Ovary (tissue), 10 donors: ENCODE measurements at regions of chr20 and their contacts with region 1.

Region 1: GRCh38 chr20:45946149-45946970 is 11.9 kb downstream of the PCIF1 start:
- DNase-seq: peak; percentile 78 to 89 (median 84)
- H3K4me3 ChIP-seq: no peak overlapping the region
- H3K27ac ChIP-seq: peak overlapping the region; percentile 85 to 88
- H3K4me1 ChIP-seq: peaks cover 16% of the 10 kb centered on the region
- H3K27me3 ChIP-seq: no peaks in the 10 kb centered on the region
- CTCF ChIP-seq: no peak
- EP300 ChIP-seq: no peak
- POLR2A ChIP-seq: no peak

Region 2: GRCh38 chr20:45880988-45881788 is 65.2 kb before region 1 on chr20 and contains the start of gene ZSWIM1:
- intact Hi-C with region 1: loop called in 1 of 4 experiments (anchors 10 kb)
- DNase-seq: peak; percentile 99 to 100 (median 100)
- H3K4me3 ChIP-seq: peak within 1 kb of the TSS; percentile 60
- H3K27ac ChIP-seq: peak within 1 kb of the TSS; percentile 62 to 79
- H3K4me1 ChIP-seq: peaks cover 2% of the 10 kb centered on the region
- H3K27me3 ChIP-seq: no peaks in the 10 kb centered on the region
- CTCF ChIP-seq: peak in 1 of 3 donors; percentile 13
- EP300 ChIP-seq: no peak
- POLR2A ChIP-seq: peak; percentile 76
- total RNA-seq, gene ZSWIM1: 4.8 to 15.2 (median 11.8) TPM

Region 3: GRCh38 chr20:45899041-45899835 is 47.1 kb before region 1 on chr20:
- intact Hi-C with region 1: loop called in 2 of 4 experiments (anchors 5 kb)
- DNase-seq: no peak
- H3K4me3 ChIP-seq: no peak overlapping the region
- H3K27ac ChIP-seq: no peak overlapping the region
- H3K4me1 ChIP-seq: no peaks in the 10 kb centered on the region
- H3K27me3 ChIP-seq: no peaks in the 10 kb centered on the region
- CTCF ChIP-seq: no peak
- EP300 ChIP-seq: no peak
- POLR2A ChIP-seq: no peak

Region 4: DNA sequence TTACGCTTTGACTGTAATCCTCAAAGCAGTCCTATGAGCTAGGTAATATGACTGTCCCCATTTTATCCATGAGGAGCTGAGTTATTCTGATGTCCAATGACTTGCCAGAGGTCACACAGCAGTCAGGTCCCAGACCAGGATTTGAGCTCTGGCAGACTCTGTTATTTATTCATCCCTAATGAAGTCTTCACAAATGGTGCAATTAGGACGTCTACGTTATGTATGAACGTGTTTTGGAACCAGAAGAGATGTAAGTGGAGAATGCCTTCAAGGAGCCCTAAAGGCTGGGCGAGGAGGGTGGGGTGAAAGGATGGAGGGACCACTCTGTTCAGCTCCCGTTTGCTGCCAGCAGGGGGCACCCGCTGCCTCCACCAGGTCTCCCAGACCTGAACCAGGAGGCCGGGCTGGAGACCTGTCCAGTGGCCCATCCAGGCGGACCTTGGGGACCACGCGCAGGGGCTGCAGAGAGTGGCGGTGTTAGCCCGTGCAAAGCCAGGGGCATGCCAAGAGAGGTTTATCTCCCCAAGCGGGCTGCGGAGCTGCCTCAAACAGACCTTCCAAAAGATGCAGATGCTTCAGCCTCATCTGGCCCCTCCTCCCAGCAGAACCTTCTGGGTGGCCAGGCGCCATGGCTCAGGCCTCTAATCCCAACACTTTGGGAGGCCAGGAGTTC is 40.9 kb after region 1 on chr20:
- intact Hi-C with region 1: no loop called
- DNase-seq: peak in 4 of 5 donors; percentile 60 to 77 (median 62)
- H3K4me3 ChIP-seq: no peak overlapping the region
- H3K27ac ChIP-seq: no peak overlapping the region
- H3K4me1 ChIP-seq: no peaks in the 10 kb centered on the region
- H3K27me3 ChIP-seq: no peaks in the 10 kb centered on the region
- CTCF ChIP-seq: peak in 1 of 3 donors; percentile 28
- EP300 ChIP-seq: no peak
- POLR2A ChIP-seq: no peak

Region 5: DNA sequence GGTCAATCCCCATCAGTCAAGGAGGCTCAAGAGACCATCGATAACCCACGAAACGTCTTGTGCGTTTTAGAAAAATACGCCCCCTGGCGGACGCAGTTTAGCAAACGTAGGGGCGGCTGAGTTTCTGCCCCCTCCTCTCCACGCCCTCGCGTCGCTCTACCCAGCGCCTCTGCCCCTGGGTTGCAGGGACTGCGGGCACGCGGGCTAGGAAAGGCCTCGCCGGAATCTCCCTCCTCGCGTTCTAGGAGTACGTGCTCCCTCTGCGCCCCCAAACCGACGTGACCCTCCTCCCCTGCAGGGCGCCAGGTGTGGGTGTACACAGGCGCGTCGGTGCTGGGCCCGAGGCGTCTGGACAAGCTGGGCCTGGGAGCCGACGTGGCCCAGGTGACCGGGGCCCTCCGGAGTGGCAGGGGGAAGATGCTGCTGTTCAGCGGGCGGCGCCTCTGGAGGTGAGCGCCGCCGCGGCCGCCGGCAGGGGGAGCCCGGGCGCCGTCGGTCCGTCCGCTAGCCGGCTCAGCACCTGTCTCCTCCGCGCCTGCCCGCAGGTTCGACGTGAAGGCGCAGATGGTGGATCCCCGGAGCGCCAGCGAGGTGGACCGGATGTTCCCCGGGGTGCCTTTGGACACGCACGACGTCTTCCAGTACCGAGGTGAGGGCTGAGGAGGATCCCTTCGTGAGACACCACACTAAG is 67.6 kb after region 1 on chr20:
- intact Hi-C with region 1: no loop called
- DNase-seq: peak; percentile 22 to 70 (median 41)
- H3K4me3 ChIP-seq: no peak overlapping the region
- H3K27ac ChIP-seq: no peak overlapping the region
- H3K4me1 ChIP-seq: no peaks in the 10 kb centered on the region
- H3K27me3 ChIP-seq: peaks cover 5% of the 10 kb centered on the region
- CTCF ChIP-seq: peak; percentile 8 to 69 (median 52)
- EP300 ChIP-seq: no peak
- POLR2A ChIP-seq: no peak

Region 6: GRCh38 chr20:46243707-46244628 is 297.6 kb after region 1 on chr20:
- intact Hi-C with region 1: no loop called
- DNase-seq: no peak
- H3K4me3 ChIP-seq: no peak overlapping the region
- H3K27ac ChIP-seq: no peak overlapping the region
- H3K4me1 ChIP-seq: no peaks in the 10 kb centered on the region
- H3K27me3 ChIP-seq: no peaks in the 10 kb centered on the region
- CTCF ChIP-seq: no peak
- EP300 ChIP-seq: no peak
- POLR2A ChIP-seq: no peak